Activated CD8-positive, alpha-beta memory T cell treated with anti-CD3 and anti-CD28 coated beads, Interleukin-2, amount 10 ng/mL, durations not matched to agents 7 days and 5 days (primary cell): ENCODE measurements at regions of chr17 and their contacts with region 1.

Region 1: DNA sequence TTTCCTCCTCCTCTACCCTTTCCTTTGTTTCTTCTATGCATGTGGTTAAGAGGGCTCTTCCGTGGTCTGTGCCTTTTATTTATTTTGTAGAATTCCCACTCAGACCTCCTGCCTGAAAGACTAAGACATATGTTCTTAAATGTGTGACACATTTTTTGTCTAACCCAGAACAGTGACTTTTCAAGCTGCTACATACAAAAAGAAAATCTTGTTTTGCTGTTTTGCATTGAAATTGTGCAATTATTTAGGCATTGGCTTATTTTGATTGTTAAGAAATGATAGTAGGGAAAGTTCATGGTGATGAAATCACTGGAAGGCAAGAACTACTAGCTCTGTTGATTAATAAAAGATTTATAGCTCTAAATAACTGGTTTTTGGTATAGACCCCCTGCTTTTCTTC is 76.8 kb downstream of the TUBD1 start:
- DNase-seq: no peak
- ATAC-seq: no peak
- H3K4me3 Mint-ChIP-seq: no peak overlapping the region
- H3K27ac Mint-ChIP-seq: no peak overlapping the region
- H3K4me1 Mint-ChIP-seq: peaks cover 42% of the 10 kb centered on the region
- H3K27me3 Mint-ChIP-seq: no peaks in the 10 kb centered on the region

Region 2: GRCh38 chr17:59199398-59199797 is 616.6 kb before region 1 on chr17:
- CTCF ChIA-PET with region 1: no interaction called
- DNase-seq: no peak
- ATAC-seq: no peak
- H3K4me3 Mint-ChIP-seq: no peak overlapping the region
- H3K27ac Mint-ChIP-seq: no peak overlapping the region
- H3K4me1 Mint-ChIP-seq: no peaks in the 10 kb centered on the region
- H3K27me3 Mint-ChIP-seq: no peaks in the 10 kb centered on the region

Region 3: DNA sequence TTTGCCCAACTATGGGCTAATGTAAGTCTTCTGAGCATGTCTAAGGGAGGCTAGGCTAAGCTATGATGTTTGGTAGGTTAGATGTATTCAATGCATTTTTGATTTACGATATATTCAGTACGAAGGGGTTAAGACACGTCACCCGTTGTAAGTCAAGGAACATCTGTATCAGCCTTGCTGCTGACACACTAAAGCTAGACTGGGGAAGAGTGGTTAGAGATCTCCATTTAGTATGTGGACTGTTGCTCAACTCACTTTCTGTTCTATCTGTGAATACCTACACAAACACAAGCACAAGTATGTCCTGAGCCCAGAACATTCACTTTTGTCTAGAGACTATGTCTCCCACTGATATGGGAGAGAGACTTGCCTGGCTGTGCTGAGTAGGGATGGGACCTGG is 37.0 kb before region 1 on chr17:
- CTCF ChIA-PET with region 1: no interaction called
- DNase-seq: no peak
- ATAC-seq: no peak
- H3K4me3 Mint-ChIP-seq: no peak overlapping the region
- H3K27ac Mint-ChIP-seq: peak overlapping the region; percentile 12
- H3K4me1 Mint-ChIP-seq: peaks cover 45% of the 10 kb centered on the region
- H3K27me3 Mint-ChIP-seq: no peaks in the 10 kb centered on the region

Region 4: DNA sequence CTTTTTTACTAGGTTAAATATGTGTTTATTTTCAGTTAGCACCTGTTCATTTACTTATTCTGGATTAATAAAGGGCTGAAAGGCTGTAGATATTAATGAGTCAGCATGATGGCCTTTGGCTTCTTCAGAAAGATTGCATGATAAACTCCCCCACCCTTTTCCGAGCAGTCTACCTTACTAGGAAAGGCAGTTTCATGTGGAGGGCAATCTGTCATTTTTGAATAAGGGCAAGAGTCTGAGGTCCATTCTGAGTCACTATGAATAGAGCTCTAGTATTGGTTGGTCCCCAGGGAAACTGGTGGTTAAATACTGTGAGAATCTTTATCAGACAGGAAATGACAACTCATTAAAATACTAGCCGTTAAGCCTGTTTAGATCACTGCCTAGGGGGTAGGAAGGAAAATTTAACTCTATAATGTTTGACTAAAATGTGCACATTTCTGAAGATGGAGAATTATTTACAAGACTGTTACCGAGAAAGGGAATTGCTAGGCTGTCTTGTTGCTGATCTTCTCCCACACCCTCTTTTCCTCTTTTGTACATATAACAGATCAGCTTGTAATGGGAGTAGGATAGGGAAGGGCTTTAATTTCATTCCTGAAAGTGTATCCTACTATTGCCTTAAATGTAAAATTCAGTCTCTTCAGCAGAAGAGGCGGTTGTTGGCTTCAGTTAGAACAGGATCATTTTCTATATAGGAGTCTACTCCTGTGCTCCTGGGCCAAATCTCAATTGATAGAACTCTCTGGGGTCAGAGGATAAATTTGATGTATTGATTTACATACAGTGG is 13.4 kb after region 1 on chr17:
- CTCF ChIA-PET with region 1: interaction called, 10 read pairs
- DNase-seq: peak; percentile 80
- ATAC-seq: peak; percentile 78
- H3K4me3 Mint-ChIP-seq: peak overlapping the region; percentile 74
- H3K27ac Mint-ChIP-seq: peak overlapping the region; percentile 98
- H3K4me1 Mint-ChIP-seq: peaks cover 83% of the 10 kb centered on the region
- H3K27me3 Mint-ChIP-seq: no peaks in the 10 kb centered on the region

Region 5: GRCh38 chr17:59846394-59847165 is 30.6 kb after region 1 on chr17:
- CTCF ChIA-PET with region 1: no interaction called
- DNase-seq: no peak
- ATAC-seq: peak; percentile 29
- H3K4me3 Mint-ChIP-seq: peak overlapping the region; percentile 13
- H3K27ac Mint-ChIP-seq: peak overlapping the region; percentile 100
- H3K4me1 Mint-ChIP-seq: peaks cover 70% of the 10 kb centered on the region
- H3K27me3 Mint-ChIP-seq: no peaks in the 10 kb centered on the region